ENCODE measurements at regions of chr1 and their contacts with region 1.

Region 1: GRCh38 chr1:26695356-26696118 is at the start of gene ARID1A:
- DNase-seq: peak; percentile 97
- H3K4me3 Mint-ChIP-seq: peak within 1 kb of the TSS; percentile 86
- H3K27ac Mint-ChIP-seq: peak within 1 kb of the TSS; percentile 98
- H3K4me1 Mint-ChIP-seq: peaks cover 25% of the 10 kb centered on the region
- H3K27me3 Mint-ChIP-seq: no peaks in the 10 kb centered on the region
- total RNA-seq, gene ARID1A: 64.3 to 67.8 TPM

Region 2: GRCh38 chr1:26279456-26280332 is 415.8 kb before region 1 on chr1 and contains the start of gene SH3BGRL3:
- CTCF ChIA-PET with region 1: no interaction called
- POLR2A ChIA-PET with region 1: no interaction called
- intact Hi-C with region 1: loop called (anchors 10 kb)
- DNase-seq: peak; percentile 89
- H3K4me3 Mint-ChIP-seq: peak within 1 kb of the TSS; percentile 89
- H3K27ac Mint-ChIP-seq: peak within 1 kb of the TSS; percentile 94
- H3K4me1 Mint-ChIP-seq: peaks cover 87% of the 10 kb centered on the region
- H3K27me3 Mint-ChIP-seq: no peaks in the 10 kb centered on the region
- total RNA-seq, gene SH3BGRL3: 305 to 320 TPM

Region 3: DNA sequence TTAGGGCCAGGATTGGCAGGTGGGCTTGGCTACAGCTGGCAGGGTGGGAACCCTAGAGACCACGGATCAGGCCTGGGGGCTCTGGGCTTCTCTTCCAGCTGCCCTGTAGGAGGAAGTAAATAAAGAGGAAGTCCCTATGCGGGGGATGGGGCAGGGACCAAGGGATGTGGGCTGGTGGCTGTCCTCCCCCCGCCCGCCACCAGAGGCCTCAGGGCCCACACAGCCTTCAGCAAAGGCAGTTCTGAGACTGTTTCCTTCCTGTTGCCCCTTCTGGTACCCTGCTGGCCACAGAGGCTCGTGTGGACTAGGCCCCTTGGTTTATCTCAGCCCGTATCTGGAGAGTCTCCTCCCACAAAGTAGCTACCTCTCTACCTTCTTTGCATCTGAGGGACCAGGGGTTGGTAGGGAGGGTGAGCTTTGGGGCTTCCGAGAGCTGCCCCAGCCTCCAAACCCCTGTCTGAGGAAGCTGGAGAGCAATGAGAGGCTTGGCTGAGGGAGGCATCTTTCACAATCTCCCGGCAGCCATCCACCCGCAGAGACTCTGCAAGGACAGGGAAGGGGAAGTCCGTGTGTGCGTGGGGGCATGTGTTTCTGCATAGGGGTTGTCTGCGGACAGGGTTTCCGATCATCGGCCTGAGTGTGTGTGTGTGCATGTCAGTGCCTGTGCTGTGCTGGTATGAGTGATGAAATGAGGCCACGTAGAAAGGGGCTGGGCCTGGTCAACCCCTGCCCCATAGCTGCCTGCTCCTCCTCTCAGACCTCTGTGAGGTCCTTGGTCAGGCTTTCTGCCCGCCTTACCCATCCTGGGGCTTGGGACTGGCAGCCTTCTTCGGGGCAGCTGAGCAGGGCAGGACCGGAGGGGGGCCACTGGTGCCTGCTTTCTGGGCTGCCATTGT is 153.5 kb before region 1 on chr1:
- CTCF ChIA-PET with region 1: no interaction called
- POLR2A ChIA-PET with region 1: no interaction called
- intact Hi-C with region 1: loop called (anchors 5 kb)
- DNase-seq: peak; percentile 94
- H3K4me3 Mint-ChIP-seq: peak overlapping the region; percentile 69
- H3K27ac Mint-ChIP-seq: peak overlapping the region; percentile 98
- H3K4me1 Mint-ChIP-seq: peaks cover 88% of the 10 kb centered on the region
- H3K27me3 Mint-ChIP-seq: no peaks in the 10 kb centered on the region

Region 4: DNA sequence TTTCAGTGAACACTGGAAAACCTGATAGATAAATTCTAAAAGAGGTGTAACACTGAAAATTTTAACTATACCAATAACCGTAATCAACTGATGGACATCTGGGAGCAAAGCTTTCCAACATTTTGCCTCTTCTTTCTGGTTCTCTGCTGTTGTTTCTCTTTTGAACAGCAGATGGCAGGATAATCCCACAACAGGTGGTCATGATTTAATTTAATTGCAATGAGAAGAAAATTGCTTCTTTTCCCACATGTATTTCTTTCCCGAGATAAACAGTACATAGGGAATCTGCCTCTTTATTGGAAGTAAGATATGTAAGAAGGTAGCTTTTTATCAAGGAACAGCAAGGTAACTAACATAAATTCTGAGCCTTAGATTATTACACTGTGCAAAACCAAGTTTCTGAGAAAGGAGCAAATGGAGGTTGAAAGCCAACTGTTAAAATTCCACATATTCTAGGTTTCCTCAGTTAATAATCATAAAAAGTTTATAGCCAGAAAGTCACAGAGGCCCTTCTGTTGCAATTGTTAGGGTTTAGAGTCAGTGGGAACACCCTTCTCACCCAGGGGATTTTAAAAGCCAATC is 93.1 kb before region 1 on chr1:
- CTCF ChIA-PET with region 1: interaction called, 15 read pairs
- POLR2A ChIA-PET with region 1: interaction called, 3 read pairs
- intact Hi-C with region 1: loop called (anchors 5 kb)
- DNase-seq: no peak
- H3K4me3 Mint-ChIP-seq: no peak overlapping the region
- H3K27ac Mint-ChIP-seq: no peak overlapping the region
- H3K4me1 Mint-ChIP-seq: peaks cover 7% of the 10 kb centered on the region
- H3K27me3 Mint-ChIP-seq: no peaks in the 10 kb centered on the region

Region 5: GRCh38 chr1:26723013-26723991 is 27.8 kb after region 1 on chr1:
- CTCF ChIA-PET with region 1: interaction called, 7 read pairs
- POLR2A ChIA-PET with region 1: interaction called, 10 read pairs
- intact Hi-C with region 1: loop called (anchors 1 kb)
- DNase-seq: peak; percentile 61
- H3K4me3 Mint-ChIP-seq: no peak overlapping the region
- H3K27ac Mint-ChIP-seq: peak overlapping the region; percentile 70
- H3K4me1 Mint-ChIP-seq: peaks cover 89% of the 10 kb centered on the region
- H3K27me3 Mint-ChIP-seq: no peaks in the 10 kb centered on the region

Region 6: DNA sequence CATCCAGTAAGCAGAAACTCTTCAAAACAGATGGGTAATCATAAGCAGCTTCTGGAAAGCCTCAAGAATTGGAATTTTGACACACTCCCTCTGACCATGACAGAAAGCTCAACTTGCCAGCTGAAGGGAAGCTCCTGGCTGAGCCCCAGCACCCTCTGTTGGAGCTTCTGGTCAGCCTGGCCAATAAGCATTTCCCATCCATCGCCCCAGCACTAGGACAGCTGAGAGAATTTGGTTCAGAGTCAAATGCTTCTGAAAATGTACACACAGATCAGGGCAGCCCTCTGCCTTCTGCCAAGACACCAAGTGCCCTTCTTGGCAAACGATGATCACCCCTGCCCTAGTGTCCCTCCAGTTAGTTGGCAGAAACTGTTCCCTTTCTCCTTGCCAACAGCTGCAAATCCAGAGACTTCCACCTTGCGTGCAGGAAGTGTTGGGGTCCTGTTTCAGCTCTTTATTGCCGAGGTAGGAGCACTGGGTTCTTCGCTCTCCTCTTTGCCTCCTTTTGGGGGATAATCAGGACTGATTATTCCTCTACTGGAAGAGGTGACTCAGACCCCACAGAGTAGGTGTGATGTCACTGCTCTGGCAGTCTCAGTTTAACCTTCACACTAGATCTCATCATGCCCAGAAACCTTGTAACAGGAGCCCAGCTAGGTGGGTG is 104.1 kb after region 1 on chr1:
- CTCF ChIA-PET with region 1: interaction called, 10 read pairs
- POLR2A ChIA-PET with region 1: interaction called, 3 read pairs
- intact Hi-C with region 1: no loop called
- DNase-seq: peak; percentile 33
- H3K4me3 Mint-ChIP-seq: no peak overlapping the region
- H3K27ac Mint-ChIP-seq: peak overlapping the region; percentile 89
- H3K4me1 Mint-ChIP-seq: peaks cover 35% of the 10 kb centered on the region
- H3K27me3 Mint-ChIP-seq: no peaks in the 10 kb centered on the region

Region 7: GRCh38 chr1:26864610-26865527 is 169.3 kb after region 1 on chr1:
- CTCF ChIA-PET with region 1: no interaction called
- POLR2A ChIA-PET with region 1: interaction called, 4 read pairs
- intact Hi-C with region 1: loop called (anchors 10 kb)
- DNase-seq: peak; percentile 97
- H3K4me3 Mint-ChIP-seq: peak overlapping the region; percentile 98
- H3K27ac Mint-ChIP-seq: peak overlapping the region; percentile 94
- H3K4me1 Mint-ChIP-seq: peaks cover 29% of the 10 kb centered on the region
- H3K27me3 Mint-ChIP-seq: no peaks in the 10 kb centered on the region